Panc1 (cell line): ENCODE measurements at regions of chr22 and their contacts with region 1.

Region 1: GRCh38 chr22:40628354-40629042 is 8.0 kb downstream of the MRTFA start:
- DNase-seq: no peak
- ATAC-seq: no peak; the same call in 1 of the 2 replicates
- H3K4me3 ChIP-seq: no peak overlapping the region
- H3K27ac ChIP-seq: no peak overlapping the region
- H3K4me1 ChIP-seq: peaks cover 18% of the 10 kb centered on the region; the same call in 1 of the 2 replicates
- H3K27me3 ChIP-seq: no peaks in the 10 kb centered on the region
- CTCF ChIP-seq: no peak

Region 2: GRCh38 chr22:39013942-39014722 is 1614.4 kb before region 1 on chr22 and contains the start of gene APOBEC3C:
- CTCF ChIA-PET with region 1: no interaction called
- POLR2A ChIA-PET with region 1: no interaction called
- in situ Hi-C with region 1: no loop called
- intact Hi-C with region 1: no loop called
- DNase-seq: no peak
- ATAC-seq: peak; percentile 96
- H3K4me3 ChIP-seq: peak within 1 kb of the TSS; percentile 16 to 51
- H3K27ac ChIP-seq: peak within 1 kb of the TSS; percentile 39
- H3K4me1 ChIP-seq: peaks cover 2% of the 10 kb centered on the region; the same call in 1 of the 2 replicates
- H3K27me3 ChIP-seq: no peaks in the 10 kb centered on the region
- CTCF ChIP-seq: no peak
- total RNA-seq, gene APOBEC3C: 12.7 TPM

Region 3: DNA sequence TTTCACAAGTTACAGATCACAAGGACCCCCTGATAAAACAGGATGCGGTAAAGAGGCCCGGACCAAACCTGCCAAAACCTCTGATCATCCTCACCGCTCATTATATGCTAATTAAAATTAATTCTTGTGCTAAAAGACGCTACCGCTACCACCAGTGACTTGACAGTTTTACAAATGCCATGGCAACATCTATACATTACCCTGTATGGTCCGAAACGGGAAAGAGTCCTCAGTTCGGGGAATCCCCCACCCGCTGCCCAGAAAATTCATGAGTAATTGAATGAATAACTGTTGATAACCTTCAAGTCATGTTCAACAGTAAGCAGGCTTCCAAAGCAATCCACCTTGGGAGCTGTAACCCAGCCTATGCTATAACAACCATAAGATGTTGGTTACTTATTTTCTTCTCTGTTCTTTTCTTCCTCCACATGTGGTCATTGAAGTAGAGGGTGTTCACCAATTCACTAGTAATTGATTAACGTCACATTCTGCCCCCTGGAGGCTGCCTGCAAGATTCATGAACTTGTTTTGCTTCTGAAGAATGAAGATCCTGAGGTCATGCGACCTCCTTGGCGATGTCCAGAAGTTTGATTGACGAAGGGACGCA is 1510.8 kb before region 1 on chr22:
- CTCF ChIA-PET with region 1: interaction called, 13 read pairs
- POLR2A ChIA-PET with region 1: no interaction called
- in situ Hi-C with region 1: no loop called
- intact Hi-C with region 1: no loop called
- DNase-seq: peak; percentile 24
- ATAC-seq: no peak
- H3K4me3 ChIP-seq: no peak overlapping the region
- H3K27ac ChIP-seq: no peak overlapping the region
- H3K4me1 ChIP-seq: no peaks in the 10 kb centered on the region
- H3K27me3 ChIP-seq: no peaks in the 10 kb centered on the region
- CTCF ChIP-seq: peak; percentile 63

Region 4: DNA sequence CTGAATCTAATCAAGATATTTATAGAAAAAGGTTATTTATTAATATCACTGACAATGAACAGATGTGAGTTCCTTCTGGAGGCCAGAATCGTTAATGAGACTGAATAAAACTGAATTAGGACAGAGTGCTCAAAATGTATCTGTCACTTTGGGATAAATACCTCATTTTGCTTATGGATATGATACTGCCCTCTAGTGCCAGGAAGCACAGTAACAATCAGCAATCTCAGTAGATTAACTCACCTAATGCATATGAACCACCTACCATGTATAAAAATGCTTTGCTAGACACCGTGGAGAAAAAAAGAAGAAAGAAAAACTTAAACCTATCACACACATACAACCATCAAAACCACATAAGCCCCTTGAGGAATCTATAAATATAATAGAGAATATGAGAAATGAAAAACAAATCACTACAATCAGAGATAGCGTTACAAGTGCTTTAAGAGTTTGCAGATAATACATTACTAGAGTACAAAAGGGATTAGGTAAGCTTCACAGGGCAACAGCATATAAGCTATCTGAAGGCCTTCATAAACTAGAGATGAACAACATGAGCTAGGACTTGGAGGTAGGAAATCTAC is 140.7 kb before region 1 on chr22:
- CTCF ChIA-PET with region 1: no interaction called
- POLR2A ChIA-PET with region 1: interaction called, 26 read pairs
- in situ Hi-C with region 1: no loop called
- intact Hi-C with region 1: no loop called
- DNase-seq: no peak
- ATAC-seq: peak; percentile 74
- H3K4me3 ChIP-seq: no peak overlapping the region
- H3K27ac ChIP-seq: peak overlapping the region; percentile 48; the same call in 1 of the 2 replicates
- H3K4me1 ChIP-seq: peaks cover 21% of the 10 kb centered on the region
- H3K27me3 ChIP-seq: no peaks in the 10 kb centered on the region
- CTCF ChIP-seq: peak; percentile 70; the same call in 1 of the 2 replicates